Mammary epithelial cell (primary cell): ENCODE measurements at regions of chr16 and their contacts with region 1.

Region 1: GRCh38 chr16:54929090-54930004 is 1.3 kb upstream of the IRX5 start:
- DNase-seq: peak; percentile 99
- H3K4me3 ChIP-seq: peak overlapping the region; percentile 71 to 78 (median 72)
- H3K27ac ChIP-seq: peak overlapping the region; percentile 86
- H3K4me1 ChIP-seq: peaks cover 17% of the 10 kb centered on the region
- H3K27me3 ChIP-seq: no peaks in the 10 kb centered on the region
- CTCF ChIP-seq: peak in 1 of 2 donors; percentile 46

Region 2: GRCh38 chr16:53892155-53892554 is 1037.2 kb before region 1 on chr16:
- CTCF ChIA-PET with region 1: no interaction called
- dilution Hi-C with region 1: no loop called
- in situ Hi-C with region 1: loop called in 1 of 2 experiments (anchors 25 kb)
- intact Hi-C with region 1: loop called (anchors 2 kb)
- DNase-seq: peak; percentile 51
- H3K4me3 ChIP-seq: no peak overlapping the region
- H3K27ac ChIP-seq: peak overlapping the region; percentile 5
- H3K4me1 ChIP-seq: peaks cover 26% of the 10 kb centered on the region
- H3K27me3 ChIP-seq: no peaks in the 10 kb centered on the region
- CTCF ChIP-seq: peak; percentile 53 to 69

Region 3: GRCh38 chr16:54447591-54448440 is 481.5 kb before region 1 on chr16:
- CTCF ChIA-PET with region 1: no interaction called
- dilution Hi-C with region 1: no loop called
- in situ Hi-C with region 1: no loop called
- intact Hi-C with region 1: loop called (anchors 5 kb)
- DNase-seq: peak; percentile 84
- H3K4me3 ChIP-seq: no peak overlapping the region
- H3K27ac ChIP-seq: no peak overlapping the region
- H3K4me1 ChIP-seq: peaks cover 21% of the 10 kb centered on the region
- H3K27me3 ChIP-seq: no peaks in the 10 kb centered on the region
- CTCF ChIP-seq: no peak

Region 4: GRCh38 chr16:54657058-54657708 is 272.2 kb before region 1 on chr16:
- CTCF ChIA-PET with region 1: no interaction called
- dilution Hi-C with region 1: loop called (anchors 5 kb)
- in situ Hi-C with region 1: no loop called
- intact Hi-C with region 1: no loop called
- DNase-seq: peak; percentile 99
- H3K4me3 ChIP-seq: no peak overlapping the region
- H3K27ac ChIP-seq: peak overlapping the region; percentile 62
- H3K4me1 ChIP-seq: peaks cover 35% of the 10 kb centered on the region
- H3K27me3 ChIP-seq: no peaks in the 10 kb centered on the region
- CTCF ChIP-seq: peak; percentile 21 to 42

Region 5: DNA sequence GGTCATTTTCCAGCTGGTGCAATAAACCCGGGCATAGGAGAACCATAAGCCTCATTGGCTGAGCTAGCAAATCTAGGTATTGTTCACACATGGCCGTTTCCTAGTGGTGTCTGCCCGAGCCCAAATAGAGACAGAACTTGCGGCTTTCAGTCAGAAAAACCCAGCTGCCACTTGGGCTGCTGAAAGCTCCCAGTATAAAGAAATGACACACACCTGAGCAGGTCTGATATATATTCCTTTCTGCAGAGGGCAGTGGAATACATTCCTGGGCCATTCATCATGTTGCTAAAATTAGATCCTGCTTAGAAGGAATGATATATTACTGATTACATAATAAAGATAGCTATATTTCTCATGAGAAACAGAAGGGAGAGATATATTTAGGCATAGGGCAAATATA is 82.6 kb before region 1 on chr16:
- CTCF ChIA-PET with region 1: no interaction called
- dilution Hi-C with region 1: no loop called
- in situ Hi-C with region 1: no loop called
- intact Hi-C with region 1: loop called (anchors 1 kb)
- DNase-seq: peak; percentile 91
- H3K4me3 ChIP-seq: no peak overlapping the region
- H3K27ac ChIP-seq: peak overlapping the region; percentile 97
- H3K4me1 ChIP-seq: peaks cover 15% of the 10 kb centered on the region
- H3K27me3 ChIP-seq: no peaks in the 10 kb centered on the region
- CTCF ChIP-seq: peak; percentile 5 to 39

Region 6: GRCh38 chr16:55242667-55243066 is 313.3 kb after region 1 on chr16:
- CTCF ChIA-PET with region 1: no interaction called
- dilution Hi-C with region 1: no loop called
- in situ Hi-C with region 1: no loop called
- intact Hi-C with region 1: no loop called
- DNase-seq: no peak
- H3K4me3 ChIP-seq: no peak overlapping the region
- H3K27ac ChIP-seq: no peak overlapping the region
- H3K4me1 ChIP-seq: no peaks in the 10 kb centered on the region
- H3K27me3 ChIP-seq: no peaks in the 10 kb centered on the region
- CTCF ChIP-seq: no peak